A673 (cell line): ENCODE measurements at regions of chr12 and their contacts with region 1.

Region 1: GRCh38 chr12:107317751-107318613 is 224.6 kb upstream of the CRY1 start:
- DNase-seq: peak; percentile 95
- H3K4me3 ChIP-seq: peak overlapping the region; percentile 61
- H3K27ac ChIP-seq: no peak overlapping the region
- H3K4me1 ChIP-seq: peaks cover 14% of the 10 kb centered on the region
- H3K27me3 ChIP-seq: peaks cover 44% of the 10 kb centered on the region
- CTCF ChIP-seq: 0 out of 2 replicates have a peak, but pooled peaks have one; percentile 11

Region 2: DNA sequence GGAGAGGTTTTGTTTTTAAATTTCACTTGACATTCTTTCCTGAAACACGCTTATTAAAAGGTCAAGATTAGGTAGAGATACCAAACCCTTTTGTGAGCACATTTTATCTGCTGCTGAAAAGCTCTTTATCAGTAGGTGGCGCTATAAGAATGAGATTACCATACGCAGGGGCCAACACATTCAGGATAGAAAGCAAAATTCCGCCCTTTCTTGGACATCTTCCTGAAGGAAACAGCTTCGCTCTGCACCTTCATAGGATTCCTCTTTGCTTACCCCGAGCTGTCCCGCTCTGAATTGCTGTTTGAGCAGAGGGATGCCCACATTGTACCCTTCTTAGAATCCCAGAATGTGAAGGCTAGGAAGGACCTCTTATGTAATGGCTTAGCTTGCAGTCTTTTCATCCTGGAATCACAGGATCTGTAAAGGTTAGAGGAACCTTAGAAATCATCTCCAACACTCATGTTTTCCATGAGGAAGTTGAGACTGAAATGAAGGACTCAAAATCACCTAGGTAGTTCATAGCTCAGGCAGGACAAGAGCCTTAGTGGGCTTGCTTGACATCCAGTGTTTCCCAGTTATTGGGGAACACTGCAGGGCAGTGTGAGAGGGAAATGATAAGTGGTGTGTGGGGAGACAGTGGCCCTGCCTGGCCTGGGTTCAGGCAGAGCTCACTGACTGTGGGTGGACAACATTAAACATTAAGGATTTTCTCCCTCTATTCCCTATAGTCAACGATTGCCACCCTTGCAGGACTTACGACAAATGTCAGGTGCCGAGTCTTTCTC is 186.0 kb before region 1 on chr12:
- CTCF ChIA-PET with region 1: no interaction called
- POLR2A ChIA-PET with region 1: no interaction called
- intact Hi-C with region 1: loop called (anchors 5 kb)
- DNase-seq: peak; percentile 76
- H3K4me3 ChIP-seq: no peak overlapping the region
- H3K27ac ChIP-seq: no peak overlapping the region
- H3K4me1 ChIP-seq: no peaks in the 10 kb centered on the region
- H3K27me3 ChIP-seq: no peaks in the 10 kb centered on the region
- CTCF ChIP-seq: peak; percentile 90

Region 3: GRCh38 chr12:107236824-107237511 is 81.0 kb before region 1 on chr12:
- CTCF ChIA-PET with region 1: no interaction called
- POLR2A ChIA-PET with region 1: no interaction called
- intact Hi-C with region 1: loop called (anchors 2 kb)
- DNase-seq: peak; percentile 95
- H3K4me3 ChIP-seq: no peak overlapping the region
- H3K27ac ChIP-seq: peak overlapping the region; percentile 29
- H3K4me1 ChIP-seq: peaks cover 38% of the 10 kb centered on the region
- H3K27me3 ChIP-seq: no peaks in the 10 kb centered on the region
- CTCF ChIP-seq: no peak

Region 4: DNA sequence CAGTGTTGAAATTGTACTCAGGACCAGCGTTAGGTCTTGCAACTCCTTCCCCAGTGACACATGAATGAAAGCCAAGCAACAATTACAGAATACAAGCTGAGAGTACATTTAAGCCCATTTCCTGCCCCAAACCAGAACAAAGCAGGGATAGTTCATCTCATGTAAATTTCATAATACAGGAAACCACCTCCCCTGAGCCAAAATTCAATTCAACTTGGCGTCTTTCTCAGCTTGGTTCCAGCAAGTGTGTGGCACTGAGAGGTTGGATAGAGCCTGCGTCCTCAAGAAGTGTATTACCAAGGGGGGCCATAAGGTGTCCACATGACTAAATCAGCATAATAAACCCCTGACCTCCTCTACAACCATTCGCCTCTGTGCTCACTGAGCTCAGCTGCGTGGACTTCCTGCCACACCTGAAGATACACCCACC is 54.3 kb after region 1 on chr12:
- CTCF ChIA-PET with region 1: no interaction called
- POLR2A ChIA-PET with region 1: interaction called, 6 read pairs
- intact Hi-C with region 1: loop called (anchors 5 kb)
- DNase-seq: peak; percentile 97
- H3K4me3 ChIP-seq: no peak overlapping the region
- H3K27ac ChIP-seq: no peak overlapping the region
- H3K4me1 ChIP-seq: peaks cover 56% of the 10 kb centered on the region
- H3K27me3 ChIP-seq: no peaks in the 10 kb centered on the region
- CTCF ChIP-seq: peak; percentile 32

Region 5: DNA sequence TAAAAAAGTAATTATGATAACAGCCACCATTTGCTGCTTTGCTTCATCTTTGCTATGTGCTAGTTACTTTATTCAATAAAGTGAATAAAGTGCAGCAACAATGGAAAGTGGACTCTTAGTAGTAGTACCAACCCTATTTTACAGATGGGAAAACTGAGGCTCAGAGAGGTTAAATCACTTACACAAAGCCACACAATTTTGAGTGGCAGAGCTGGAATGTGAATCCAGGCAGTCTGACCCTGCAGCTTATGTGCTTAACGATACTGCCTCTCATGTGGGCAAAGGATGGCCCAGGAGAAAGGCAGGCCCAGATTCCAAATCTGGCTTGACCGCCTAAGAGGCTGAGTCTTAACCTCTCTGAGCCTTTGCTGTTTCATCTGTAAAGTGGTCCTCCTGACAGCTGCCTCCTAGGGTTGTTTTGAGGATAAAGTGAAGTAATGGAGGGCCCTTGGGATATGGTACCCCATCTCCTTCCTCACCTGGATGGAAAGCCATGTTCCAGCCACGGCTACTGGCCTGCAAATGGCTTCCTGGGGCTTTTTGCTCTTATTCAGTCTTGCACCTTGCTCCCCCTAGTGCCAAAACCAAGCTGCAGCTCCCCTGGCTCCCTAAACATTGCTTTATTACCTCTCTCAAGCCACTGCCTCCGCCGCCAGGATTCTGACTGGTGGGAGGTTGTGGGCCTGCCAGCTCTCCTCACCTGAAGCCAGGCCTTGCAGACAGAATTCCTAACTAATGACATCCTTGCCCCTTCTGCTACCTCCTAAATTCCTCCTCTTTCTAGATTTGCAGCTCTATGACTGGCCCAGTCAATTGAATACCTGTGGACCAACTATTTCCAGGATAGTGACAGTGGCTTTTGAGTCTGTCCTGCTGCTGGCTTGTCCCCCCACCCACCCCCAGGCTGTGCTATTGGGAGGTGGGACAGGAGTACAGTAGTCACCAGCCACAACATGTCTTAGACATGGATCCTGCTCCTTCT is 84.3 kb after region 1 on chr12:
- CTCF ChIA-PET with region 1: interaction called, 5 read pairs
- POLR2A ChIA-PET with region 1: no interaction called
- intact Hi-C with region 1: loop called (anchors 2 kb)
- DNase-seq: peak; percentile 82
- H3K4me3 ChIP-seq: no peak overlapping the region
- H3K27ac ChIP-seq: no peak overlapping the region
- H3K4me1 ChIP-seq: peaks cover 13% of the 10 kb centered on the region
- H3K27me3 ChIP-seq: no peaks in the 10 kb centered on the region
- CTCF ChIP-seq: peak; percentile 85

Region 6: DNA sequence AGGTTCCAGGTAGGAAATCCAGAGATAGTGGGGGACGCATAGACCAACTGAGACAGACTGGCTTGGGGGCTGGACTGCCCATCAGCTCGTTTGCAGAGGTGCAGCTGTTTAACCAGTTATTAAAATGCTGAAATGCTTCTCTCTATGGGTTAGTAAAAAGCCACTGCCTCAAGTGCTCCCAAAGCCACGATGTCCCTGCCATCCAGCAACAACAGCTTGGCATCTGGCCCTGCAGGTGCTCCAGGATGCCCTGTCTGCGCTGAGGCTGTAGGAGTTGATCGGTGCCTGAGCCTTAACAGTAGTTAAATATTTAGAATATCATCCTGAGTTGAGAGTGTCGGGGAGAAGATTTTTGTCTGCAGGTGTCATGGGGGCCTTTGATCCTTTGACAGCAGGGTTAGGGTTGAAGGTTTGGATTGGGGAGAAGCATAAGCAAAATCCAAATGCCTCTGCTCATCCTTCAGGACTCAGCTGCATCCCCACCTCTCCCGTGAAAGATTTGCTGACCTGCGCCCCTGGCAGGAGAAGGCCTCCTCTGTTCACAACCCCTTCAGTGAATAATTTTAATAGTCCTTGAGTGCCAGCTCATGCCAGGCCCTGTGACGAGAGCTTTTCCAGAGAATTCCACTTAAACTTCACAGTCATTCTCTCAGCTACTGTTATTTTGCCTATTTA is 240.3 kb after region 1 on chr12:
- CTCF ChIA-PET with region 1: no interaction called
- POLR2A ChIA-PET with region 1: no interaction called
- intact Hi-C with region 1: loop called (anchors 5 kb)
- DNase-seq: no peak
- H3K4me3 ChIP-seq: no peak overlapping the region
- H3K27ac ChIP-seq: no peak overlapping the region
- H3K4me1 ChIP-seq: peaks cover 9% of the 10 kb centered on the region
- H3K27me3 ChIP-seq: no peaks in the 10 kb centered on the region
- CTCF ChIP-seq: no peak

Region 7: DNA sequence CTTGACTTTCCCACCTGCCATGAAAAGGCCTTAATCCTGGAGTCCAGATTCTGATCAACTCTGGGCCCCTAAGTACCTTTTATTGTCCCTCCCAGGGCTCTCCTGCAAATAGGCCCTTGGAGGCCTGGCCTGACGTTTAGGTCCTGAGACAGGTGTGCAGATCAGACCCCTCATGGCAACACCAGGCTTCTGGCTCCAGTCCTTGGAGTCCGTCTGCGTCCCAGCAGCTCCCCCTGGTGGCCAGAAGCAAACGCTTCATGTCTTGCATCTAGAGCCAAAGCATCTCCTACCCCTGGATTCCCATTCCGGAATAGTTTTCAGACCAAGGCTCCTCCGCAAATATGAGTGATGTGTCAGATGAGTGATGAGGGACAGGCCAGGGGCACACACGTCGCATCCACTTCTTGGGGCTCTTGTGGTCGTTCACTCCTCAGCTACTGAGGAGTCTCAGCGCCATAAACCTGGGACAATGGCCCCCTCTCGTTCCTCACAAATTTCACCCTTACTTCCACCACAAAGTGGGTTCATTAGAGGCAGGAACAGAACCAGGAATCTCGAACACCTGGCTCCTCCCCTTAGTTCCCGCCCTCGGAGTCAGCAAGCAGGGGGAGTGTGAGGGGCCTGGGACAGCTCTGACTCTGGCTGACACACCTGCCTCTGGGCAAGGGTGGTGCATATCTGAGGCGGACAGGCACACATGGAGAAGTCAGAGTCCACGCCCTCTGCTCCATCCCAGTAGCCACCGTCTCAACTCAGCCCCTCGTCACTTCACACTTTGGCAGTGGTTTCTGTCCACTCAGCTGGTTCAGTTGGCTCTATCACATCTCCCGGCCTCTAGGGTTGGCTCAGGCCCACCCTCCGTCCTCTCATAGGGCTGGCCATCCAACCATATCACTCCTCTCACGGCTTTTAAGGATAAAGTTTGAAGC is 289.7 kb after region 1 on chr12:
- CTCF ChIA-PET with region 1: no interaction called
- POLR2A ChIA-PET with region 1: no interaction called
- intact Hi-C with region 1: loop called (anchors 5 kb)
- DNase-seq: peak; percentile 85
- H3K4me3 ChIP-seq: no peak overlapping the region
- H3K27ac ChIP-seq: no peak overlapping the region
- H3K4me1 ChIP-seq: no peaks in the 10 kb centered on the region
- H3K27me3 ChIP-seq: no peaks in the 10 kb centered on the region
- CTCF ChIP-seq: peak; percentile 92